Esophagus squamous epithelium (tissue), 5 donors: ENCODE measurements at regions of chr19 and their contacts with region 1.

Region 1: DNA sequence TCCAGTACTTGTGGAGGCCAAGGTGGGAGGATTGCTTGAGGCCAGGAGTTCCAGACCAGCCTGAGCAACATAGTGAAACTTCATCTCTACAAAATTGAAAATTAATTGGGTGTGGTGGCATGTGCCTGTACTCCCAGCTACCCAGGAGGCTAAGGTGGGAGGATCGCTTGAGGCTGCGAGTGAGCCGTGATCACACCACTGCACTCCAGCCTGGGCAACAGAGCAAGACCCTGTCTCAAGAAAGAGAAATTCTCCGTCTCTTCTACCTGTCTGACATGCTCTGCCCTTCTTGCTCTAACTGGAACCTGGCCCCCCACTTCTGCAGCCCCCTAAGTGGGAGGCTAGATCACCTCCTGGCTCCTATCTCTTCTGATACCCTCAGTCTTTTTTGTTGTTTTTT is 7.4 kb downstream of the EIF3K start:
- DNase-seq: no peak
- H3K4me3 ChIP-seq: no peak overlapping the region
- H3K27ac ChIP-seq: no peak overlapping the region
- H3K4me1 ChIP-seq: peaks cover 0 to 4% (median 0%) of the 10 kb centered on the region in 3 donors
- H3K27me3 ChIP-seq: no peaks in the 10 kb centered on the region
- CTCF ChIP-seq: no peak
- POLR2A ChIP-seq: no peak

Region 2: GRCh38 chr19:38544959-38545315 is 81.5 kb before region 1 on chr19:
- intact Hi-C with region 1: loop called (anchors 5 kb)
- DNase-seq: no peak
- H3K4me3 ChIP-seq: no peak overlapping the region
- H3K27ac ChIP-seq: peak overlapping the region in 3 of 4 donors; percentile 30 to 61 (median 44)
- H3K4me1 ChIP-seq: peaks cover 0 to 26% (median 13%) of the 10 kb centered on the region in 3 donors
- H3K27me3 ChIP-seq: no peaks in the 10 kb centered on the region
- CTCF ChIP-seq: no peak
- POLR2A ChIP-seq: no peak

Region 3: DNA sequence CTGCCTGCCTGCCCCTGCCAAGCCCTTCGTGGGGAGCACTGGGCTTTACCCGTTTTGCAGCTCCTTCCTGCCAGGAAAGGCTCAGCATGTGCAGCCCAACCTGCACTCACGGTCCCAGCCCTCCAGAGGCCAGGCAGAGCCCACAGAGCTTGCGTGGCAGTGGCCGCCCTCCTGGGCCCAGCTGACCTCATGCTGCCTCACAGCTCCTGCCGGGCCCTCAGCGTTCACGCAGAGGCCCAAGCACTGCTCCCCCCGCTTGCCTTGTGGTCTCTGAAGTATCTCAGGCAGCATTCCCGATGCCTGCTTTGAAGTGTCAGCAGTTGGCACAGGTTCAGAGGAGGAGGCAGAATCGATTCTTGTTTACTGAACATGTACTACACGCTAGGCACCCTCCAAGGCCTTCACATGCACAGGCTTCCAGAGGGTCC is 85.3 kb after region 1 on chr19:
- intact Hi-C with region 1: no loop called
- DNase-seq: no peak
- H3K4me3 ChIP-seq: no peak overlapping the region
- H3K27ac ChIP-seq: peak overlapping the region; percentile 26 to 86 (median 81)
- H3K4me1 ChIP-seq: peaks cover 33 to 74% (median 59%) of the 10 kb centered on the region in 3 donors
- H3K27me3 ChIP-seq: no peaks in the 10 kb centered on the region
- CTCF ChIP-seq: peak in 1 of 6 experiments; percentile 6
- POLR2A ChIP-seq: no peak